Dorsolateral prefrontal cortex (tissue), 120 donors: ENCODE measurements at regions of chr11 and their contacts with region 1.

Region 1: DNA sequence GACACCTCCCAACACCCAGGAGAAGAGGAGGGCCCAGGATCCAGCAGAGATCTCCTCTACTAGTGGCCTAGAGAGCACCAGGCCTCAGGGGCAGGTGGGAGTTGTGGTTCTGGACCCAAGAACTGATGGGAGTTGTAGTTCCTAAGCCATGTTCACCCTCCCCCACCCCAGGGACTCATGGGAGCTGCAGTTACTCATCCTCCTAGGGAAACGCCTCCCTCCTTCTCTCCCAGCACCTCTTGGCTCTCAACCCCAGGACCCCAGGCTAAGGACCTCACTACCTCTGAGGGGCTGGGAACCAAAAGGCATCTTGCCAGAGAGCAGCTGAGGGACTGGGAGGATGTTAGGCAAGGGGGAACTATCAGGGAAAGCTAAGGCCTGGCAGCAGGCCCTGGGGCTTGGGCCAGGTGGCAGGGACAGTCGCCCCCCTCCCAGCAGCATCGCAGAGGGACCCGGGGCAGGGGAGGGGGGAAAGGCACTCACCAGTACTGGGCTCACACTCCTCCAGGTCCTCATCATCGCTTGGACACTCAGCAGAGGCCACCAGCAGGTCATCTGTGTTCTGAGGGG is 28.9 kb downstream of the SLC22A12 start:
- DNase-seq: peak in 5 of 10 donors; percentile 42 to 85 (median 60)
- H3K4me3 ChIP-seq: peak overlapping the region in 3 of 59 donors; percentile 3 to 30 (median 15)
- H3K27ac ChIP-seq: peak overlapping the region in 53 of 59 donors; percentile 19 to 91 (median 64)
- H3K27me3 ChIP-seq: no peaks in the 10 kb centered on the region
- CTCF ChIP-seq: no peak

Region 2: GRCh38 chr11:64583296-64584232 is 36.3 kb before region 1 on chr11:
- intact Hi-C with region 1: loop called in 1 of 2 experiments (anchors 1 kb)
- DNase-seq: peak in 4 of 10 donors; percentile 21 to 78 (median 28)
- H3K4me3 ChIP-seq: no peak overlapping the region
- H3K27ac ChIP-seq: peak overlapping the region in 1 of 59 donors; percentile 71
- H3K27me3 ChIP-seq: no peaks in the 10 kb centered on the region
- CTCF ChIP-seq: no peak

Region 3: GRCh38 chr11:64643256-64643881 is 23.5 kb after region 1 on chr11:
- intact Hi-C with region 1: loop called in 1 of 2 experiments (anchors 1 kb)
- DNase-seq: peak in 9 of 10 donors; percentile 35 to 87 (median 72)
- H3K4me3 ChIP-seq: peak overlapping the region; percentile 36 to 79 (median 65)
- H3K27ac ChIP-seq: peak overlapping the region in 46 of 59 donors; percentile 14 to 92 (median 77)
- H3K27me3 ChIP-seq: peaks cover 0 to 3% (median 0%) of the 10 kb centered on the region in 45 donors
- CTCF ChIP-seq: peak in 6 of 56 donors; percentile 9 to 23 (median 16)

Region 4: GRCh38 chr11:64762674-64763525 is 143.0 kb after region 1 on chr11:
- intact Hi-C with region 1: no loop called
- DNase-seq: peak in 2 of 10 donors; percentile 25 to 40
- H3K4me3 ChIP-seq: peak overlapping the region in 2 of 59 donors; percentile 6 to 19
- H3K27ac ChIP-seq: peak overlapping the region in 54 of 59 donors; percentile 27 to 85 (median 65)
- H3K27me3 ChIP-seq: no peaks in the 10 kb centered on the region
- CTCF ChIP-seq: no peak